ENCODE measurements at regions of chr1 and their contacts with region 1.

Region 1: GRCh38 chr1:107782217-107782845 is 182.6 kb downstream of the VAV3 start:
- DNase-seq: peak; percentile 74
- H3K4me3 Mint-ChIP-seq: no peak overlapping the region
- H3K27ac Mint-ChIP-seq: no peak overlapping the region
- H3K4me1 Mint-ChIP-seq: peaks cover 25% of the 10 kb centered on the region
- H3K27me3 Mint-ChIP-seq: no peaks in the 10 kb centered on the region

Region 2: GRCh38 chr1:108118018-108118902 is 335.9 kb after region 1 on chr1:
- CTCF ChIA-PET with region 1: interaction called, 76 read pairs
- POLR2A ChIA-PET with region 1: interaction called, 3 read pairs
- DNase-seq: no peak
- H3K4me3 Mint-ChIP-seq: no peak overlapping the region
- H3K27ac Mint-ChIP-seq: no peak overlapping the region
- H3K4me1 Mint-ChIP-seq: peaks cover 5% of the 10 kb centered on the region
- H3K27me3 Mint-ChIP-seq: peaks cover 5% of the 10 kb centered on the region

Region 3: GRCh38 chr1:108125312-108126138 is 343.2 kb after region 1 on chr1:
- CTCF ChIA-PET with region 1: interaction called, 76 read pairs
- POLR2A ChIA-PET with region 1: interaction called, 3 read pairs
- DNase-seq: peak; percentile 76
- H3K4me3 Mint-ChIP-seq: no peak overlapping the region
- H3K27ac Mint-ChIP-seq: no peak overlapping the region
- H3K4me1 Mint-ChIP-seq: no peaks in the 10 kb centered on the region
- H3K27me3 Mint-ChIP-seq: no peaks in the 10 kb centered on the region